HepG2 (cell line): ENCODE measurements at regions of chr5 and their contacts with region 1.

Region 1: DNA sequence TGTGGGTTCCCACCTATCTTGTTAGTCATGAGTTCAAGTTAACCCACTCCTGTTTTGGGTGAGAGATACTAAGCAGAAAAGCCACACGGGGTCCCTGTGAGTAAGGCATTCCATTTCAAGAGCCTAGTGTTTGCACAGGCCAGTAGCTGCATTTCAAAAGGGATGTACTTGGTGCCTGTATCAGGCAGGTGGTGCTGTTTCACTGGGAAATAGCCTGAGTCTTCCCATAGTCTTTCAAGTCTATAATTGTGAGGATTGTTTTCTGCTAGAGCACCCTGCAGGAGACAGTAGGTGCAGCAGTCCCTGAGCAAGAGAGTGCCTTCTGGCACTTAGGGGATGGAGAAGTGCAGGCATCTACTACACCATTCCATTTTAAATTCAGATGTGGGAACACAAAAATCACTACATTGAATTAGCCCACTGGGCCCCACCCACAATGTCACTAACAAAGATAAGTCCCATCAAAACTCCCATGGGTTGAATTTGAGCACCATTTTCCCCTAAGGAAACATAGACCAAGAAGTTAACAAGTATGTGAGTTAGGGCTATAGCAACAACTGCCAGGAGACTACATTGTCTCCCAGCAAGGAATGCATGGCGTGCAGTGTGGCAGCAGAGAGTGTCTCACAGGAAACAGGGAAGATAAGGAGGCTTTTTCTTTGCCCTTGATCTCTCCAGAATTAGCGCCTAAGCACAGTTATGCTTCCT is 263.2 kb downstream of the COX7C start:
- DNase-seq: peak; percentile 84
- ATAC-seq: peak; percentile 99
- H3K4me3 ChIP-seq: no peak overlapping the region
- H3K27ac ChIP-seq: no peak overlapping the region
- H3K4me1 ChIP-seq: peaks cover 5% of the 10 kb centered on the region; the same call in 1 of the 2 replicates
- H3K27me3 ChIP-seq: no peaks in the 10 kb centered on the region; a peak in 1 of 5 replicates
- CTCF ChIP-seq: peak; percentile 80
- EP300 ChIP-seq: no peak
- POLR2A ChIP-seq: no peak
- RAD21 ChIP-seq: peak; percentile 78

Region 2: GRCh38 chr5:86968301-86968753 is 87.4 kb after region 1 on chr5:
- CTCF ChIA-PET with region 1: interaction called, 7 read pairs
- POLR2A ChIA-PET with region 1: no interaction called
- in situ Hi-C with region 1: no loop called
- intact Hi-C with region 1: loop called (anchors 1 kb)
- DNase-seq: peak; percentile 20
- ATAC-seq: peak; percentile 74
- H3K4me3 ChIP-seq: no peak overlapping the region
- H3K27ac ChIP-seq: no peak overlapping the region
- H3K4me1 ChIP-seq: peaks cover 6% of the 10 kb centered on the region; the same call in 1 of the 2 replicates
- H3K27me3 ChIP-seq: no peaks in the 10 kb centered on the region
- CTCF ChIP-seq: peak; percentile 36
- EP300 ChIP-seq: no peak
- POLR2A ChIP-seq: no peak
- RAD21 ChIP-seq: no peak

Region 3: DNA sequence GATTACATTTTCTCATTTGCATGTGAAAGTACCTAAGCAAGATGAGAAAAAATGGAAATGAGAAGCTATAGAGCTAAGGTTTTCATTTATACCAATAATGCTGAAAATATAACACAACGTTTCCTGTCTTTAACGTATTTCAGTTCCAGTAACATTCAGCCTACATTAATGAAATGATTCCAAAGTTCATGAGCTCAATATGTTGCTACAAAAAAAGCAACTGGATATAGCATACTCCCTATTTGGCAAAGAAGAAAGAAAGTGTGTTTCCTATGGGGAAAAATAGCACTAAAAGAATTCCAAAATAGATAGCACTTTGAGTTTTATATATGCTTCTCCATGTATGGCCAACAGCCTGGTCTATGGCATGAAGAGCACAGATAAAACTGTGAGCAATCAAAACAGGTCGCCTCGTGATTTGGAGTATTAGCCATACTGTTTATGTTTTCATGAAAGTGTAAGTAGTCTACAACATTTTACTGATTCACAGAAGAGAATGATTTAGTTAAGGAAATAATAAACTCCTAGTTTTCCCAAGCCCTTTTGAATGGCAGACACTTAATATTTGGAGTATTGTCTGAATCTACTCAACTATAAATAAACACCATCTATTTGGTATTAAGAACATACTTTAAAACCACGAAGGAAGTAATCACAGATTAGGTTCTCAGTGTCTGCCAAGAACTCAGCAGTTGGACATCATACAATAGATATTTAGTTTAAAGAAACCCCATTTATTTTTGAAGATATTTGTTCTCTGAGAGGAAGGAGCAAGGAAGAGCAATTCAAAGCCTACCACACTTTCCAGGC is 128.0 kb after region 1 on chr5:
- CTCF ChIA-PET with region 1: interaction called, 25 read pairs
- POLR2A ChIA-PET with region 1: no interaction called
- in situ Hi-C with region 1: no loop called
- intact Hi-C with region 1: loop called (anchors 1 kb)
- DNase-seq: no peak
- ATAC-seq: no peak
- H3K4me3 ChIP-seq: no peak overlapping the region
- H3K27ac ChIP-seq: no peak overlapping the region
- H3K4me1 ChIP-seq: no peaks in the 10 kb centered on the region
- H3K27me3 ChIP-seq: no peaks in the 10 kb centered on the region; a peak in 1 of 5 replicates
- CTCF ChIP-seq: no peak
- EP300 ChIP-seq: no peak
- POLR2A ChIP-seq: no peak
- RAD21 ChIP-seq: no peak

Region 4: DNA sequence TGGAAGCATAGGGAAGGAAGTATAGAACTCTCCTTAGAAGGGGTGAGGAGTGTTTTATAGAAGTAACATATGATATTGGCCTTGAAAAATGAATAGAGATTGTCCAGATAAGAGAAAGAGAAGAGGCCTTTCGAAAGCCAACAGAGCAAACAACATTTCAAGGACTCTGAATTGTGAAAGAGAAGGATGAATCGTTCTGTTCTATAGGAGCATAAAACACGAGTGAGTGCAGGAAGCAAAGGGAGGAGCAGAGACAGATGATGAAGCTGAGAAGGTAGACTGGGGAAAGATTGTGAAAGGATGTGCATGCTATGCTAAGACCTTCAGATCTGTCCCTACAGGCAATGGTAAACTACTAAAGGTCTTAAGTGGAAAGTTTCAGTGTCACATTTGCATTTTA is 1116.7 kb after region 1 on chr5:
- CTCF ChIA-PET with region 1: no interaction called
- POLR2A ChIA-PET with region 1: no interaction called
- in situ Hi-C with region 1: no loop called
- intact Hi-C with region 1: no loop called
- DNase-seq: peak; percentile 59
- ATAC-seq: peak; percentile 87
- H3K4me3 ChIP-seq: no peak overlapping the region
- H3K27ac ChIP-seq: no peak overlapping the region
- H3K4me1 ChIP-seq: peaks cover 17% of the 10 kb centered on the region
- H3K27me3 ChIP-seq: no peaks in the 10 kb centered on the region
- CTCF ChIP-seq: no peak
- EP300 ChIP-seq: peak in 1 of 2 experiments; percentile 64; a peak in 2 of 4 replicates
- POLR2A ChIP-seq: no peak
- RAD21 ChIP-seq: no peak